CD14-positive monocyte (primary cell): ENCODE measurements at regions of chr1 and their contacts with region 1.

Region 1: GRCh38 chr1:201895913-201896807 is 7.5 kb downstream of the SHISA4 start:
- DNase-seq: peak; percentile 81 to 90 (median 82)
- H3K4me3 ChIP-seq: no peak overlapping the region
- H3K4me3 Mint-ChIP-seq: peak overlapping the region; percentile 12 to 47
- H3K27ac ChIP-seq: no peak overlapping the region
- H3K27ac Mint-ChIP-seq: peak overlapping the region in 1 of 7 donors; percentile 15
- H3K4me1 ChIP-seq: no peaks in the 10 kb centered on the region
- H3K4me1 Mint-ChIP-seq: peaks cover 6% of the 10 kb centered on the region
- H3K27me3 ChIP-seq: peaks cover 0 to 3% of the 10 kb centered on the region in 2 donors
- H3K27me3 Mint-ChIP-seq: peaks cover 4 to 8% (median 7%) of the 10 kb centered on the region in 3 donors
- CTCF ChIP-seq: peak; percentile 96

Region 2: DNA sequence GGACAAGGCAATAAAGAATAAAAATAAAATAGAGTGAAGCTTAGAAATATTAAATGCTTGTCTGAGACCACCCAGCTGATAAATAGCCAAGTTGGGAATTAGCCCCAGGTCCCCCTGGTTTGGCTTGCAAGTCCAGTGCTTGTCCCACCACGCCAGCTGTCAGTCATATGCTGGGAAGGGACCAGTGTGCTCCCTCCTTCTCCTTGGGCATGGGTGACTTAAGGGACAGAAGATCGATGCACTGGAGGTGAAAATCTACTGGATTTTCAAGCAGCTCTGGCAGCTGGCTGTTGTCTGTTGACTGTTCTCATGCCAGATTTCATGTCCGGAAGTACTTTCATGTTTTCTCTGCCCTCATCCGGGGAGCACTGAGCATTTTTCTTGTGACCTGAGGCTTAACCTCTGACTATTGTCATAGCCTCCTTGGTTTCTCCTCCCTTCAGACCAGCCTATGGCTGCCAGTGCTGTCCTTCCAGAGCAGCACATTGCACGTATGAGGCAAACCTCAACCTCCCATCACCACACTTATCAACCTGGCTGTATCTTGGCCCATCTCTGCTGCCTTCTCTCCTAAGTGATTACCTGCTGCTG is 37.8 kb after region 1 on chr1:
- intact Hi-C with region 1: no loop called
- DNase-seq: no peak
- H3K4me3 ChIP-seq: no peak overlapping the region
- H3K4me3 Mint-ChIP-seq: no peak overlapping the region
- H3K27ac ChIP-seq: no peak overlapping the region
- H3K27ac Mint-ChIP-seq: no peak overlapping the region
- H3K4me1 ChIP-seq: no peaks in the 10 kb centered on the region
- H3K4me1 Mint-ChIP-seq: peaks cover 4% of the 10 kb centered on the region
- H3K27me3 ChIP-seq: peaks cover 0 to 14% of the 10 kb centered on the region in 2 donors
- H3K27me3 Mint-ChIP-seq: peaks cover 7 to 17% (median 9%) of the 10 kb centered on the region in 3 donors
- CTCF ChIP-seq: no peak

Region 3: DNA sequence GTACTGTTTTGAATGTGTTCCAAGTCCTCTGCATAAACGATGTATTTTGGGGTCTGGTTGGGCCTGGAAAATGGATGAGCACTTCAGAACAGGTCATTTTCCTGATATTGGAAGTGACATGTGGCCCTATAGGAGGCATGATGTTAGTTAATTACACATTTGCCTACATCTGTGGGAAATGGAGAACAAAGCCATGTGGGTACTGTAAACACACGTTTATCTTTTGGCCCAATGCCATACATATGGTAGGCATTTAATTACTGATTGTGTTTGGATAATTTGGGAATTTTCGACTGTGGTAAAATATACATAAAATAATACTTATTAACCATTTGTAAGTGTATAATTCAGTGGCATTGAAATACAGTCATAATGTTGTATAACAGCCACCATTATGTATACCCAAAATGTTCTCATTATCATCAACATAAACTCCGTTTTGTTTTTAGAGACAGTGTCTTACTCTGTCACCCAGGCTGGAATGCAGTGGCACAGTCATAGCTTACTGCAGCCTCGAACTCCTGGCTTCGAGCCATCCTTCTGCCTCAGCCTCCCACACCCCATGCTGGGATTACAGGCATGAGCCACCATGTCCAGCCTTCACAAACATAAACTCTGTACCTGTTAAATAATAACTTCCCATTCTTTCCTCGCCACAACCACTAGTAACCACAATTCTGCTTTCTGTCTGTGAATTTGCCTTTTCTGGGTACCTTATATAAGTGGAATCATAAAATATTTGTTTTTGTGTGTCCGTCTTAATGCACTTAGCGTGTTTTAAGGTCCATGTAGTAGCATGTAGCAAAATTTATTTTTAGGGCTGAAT is 74.4 kb after region 1 on chr1:
- intact Hi-C with region 1: loop called (anchors 1 to 5 kb)
- DNase-seq: no peak
- H3K4me3 ChIP-seq: no peak overlapping the region
- H3K4me3 Mint-ChIP-seq: no peak overlapping the region
- H3K27ac ChIP-seq: no peak overlapping the region
- H3K27ac Mint-ChIP-seq: no peak overlapping the region
- H3K4me1 ChIP-seq: no peaks in the 10 kb centered on the region
- H3K4me1 Mint-ChIP-seq: peaks cover 1% of the 10 kb centered on the region
- H3K27me3 ChIP-seq: no peaks in the 10 kb centered on the region
- H3K27me3 Mint-ChIP-seq: peaks cover 4 to 9% (median 8%) of the 10 kb centered on the region in 3 donors
- CTCF ChIP-seq: no peak